WTC11 (cell line): ENCODE measurements at regions of chr6 and their contacts with region 1.

Region 1: DNA sequence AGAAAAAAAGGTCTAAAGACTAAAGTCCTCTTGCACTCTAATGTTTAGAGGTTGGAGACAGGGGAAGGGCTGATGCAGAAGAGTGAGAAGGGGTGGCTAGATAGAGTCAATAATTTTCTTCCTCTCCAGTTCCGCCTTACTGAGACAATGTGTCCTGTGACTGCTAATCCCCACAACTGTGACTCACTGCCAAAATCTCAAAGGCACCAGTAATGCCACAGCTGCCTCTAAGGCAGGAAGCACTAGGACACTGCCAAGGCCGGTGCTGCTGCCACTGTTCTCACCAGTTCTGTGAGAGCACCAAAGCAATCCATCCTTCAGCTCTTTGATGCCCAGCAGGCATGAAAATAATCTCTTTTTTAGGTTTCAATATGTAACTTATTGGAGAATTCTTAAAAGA is 701.9 kb upstream of the MAP3K7 start:
- DNase-seq: no peak
- ATAC-seq: no peak
- H3K4me3 Mint-ChIP-seq: no peak overlapping the region
- H3K27ac Mint-ChIP-seq: no peak overlapping the region
- H3K4me1 Mint-ChIP-seq: no peaks in the 10 kb centered on the region
- H3K27me3 Mint-ChIP-seq: peaks cover 99% of the 10 kb centered on the region
- CTCF ChIP-seq: no peak

Region 2: GRCh38 chr6:91276315-91276714 is 12.4 kb before region 1 on chr6:
- CTCF ChIA-PET with region 1: interaction called, 11 read pairs
- POLR2A ChIA-PET with region 1: no interaction called
- DNase-seq: no peak
- ATAC-seq: peak; percentile 89
- H3K4me3 Mint-ChIP-seq: no peak overlapping the region
- H3K27ac Mint-ChIP-seq: no peak overlapping the region
- H3K4me1 Mint-ChIP-seq: peaks cover 24% of the 10 kb centered on the region
- H3K27me3 Mint-ChIP-seq: peaks cover 26% of the 10 kb centered on the region
- CTCF ChIP-seq: peak; percentile 50

Region 3: GRCh38 chr6:91328241-91328640 is 39.5 kb after region 1 on chr6:
- CTCF ChIA-PET with region 1: no interaction called
- POLR2A ChIA-PET with region 1: no interaction called
- DNase-seq: no peak
- ATAC-seq: no peak
- H3K4me3 Mint-ChIP-seq: no peak overlapping the region
- H3K27ac Mint-ChIP-seq: no peak overlapping the region
- H3K4me1 Mint-ChIP-seq: peaks cover 10% of the 10 kb centered on the region
- H3K27me3 Mint-ChIP-seq: no peaks in the 10 kb centered on the region
- CTCF ChIP-seq: no peak